CD4-positive, alpha-beta memory T cell (primary cell): ENCODE measurements at regions of chr17 and their contacts with region 1.

Region 1: GRCh38 chr17:385926-386876 is 33.6 kb upstream of the RPH3AL start:
- DNase-seq: peak; percentile 43 to 61 (median 53)
- H3K4me3 ChIP-seq: no peak overlapping the region
- H3K4me3 Mint-ChIP-seq: peak overlapping the region; percentile 82 to 89 (median 86)
- H3K27ac ChIP-seq: no peak overlapping the region
- H3K27ac Mint-ChIP-seq: peak overlapping the region in 6 of 7 donors; percentile 20 to 88 (median 72)
- H3K4me1 ChIP-seq: peaks cover 5% of the 10 kb centered on the region
- H3K4me1 Mint-ChIP-seq: peaks cover 11 to 40% (median 16%) of the 10 kb centered on the region in 4 donors
- H3K27me3 ChIP-seq: peaks cover 3% of the 10 kb centered on the region
- H3K27me3 Mint-ChIP-seq: peaks cover 3% of the 10 kb centered on the region in 2 donors

Region 2: GRCh38 chr17:143782-144281 is 242.4 kb before region 1 on chr17:
- CTCF ChIA-PET with region 1: interaction called, 3 read pairs
- POLR2A ChIA-PET with region 1: interaction called, 3 read pairs
- intact Hi-C with region 1: loop called (anchors 1 kb)
- DNase-seq: peak; percentile 73 to 85 (median 80)
- H3K4me3 ChIP-seq: no peak overlapping the region
- H3K4me3 Mint-ChIP-seq: peak overlapping the region in 1 of 8 donors; percentile 49
- H3K27ac ChIP-seq: no peak overlapping the region
- H3K27ac Mint-ChIP-seq: no peak overlapping the region
- H3K4me1 ChIP-seq: peaks cover 4% of the 10 kb centered on the region
- H3K4me1 Mint-ChIP-seq: peaks cover 0 to 2% (median under 1%) of the 10 kb centered on the region in 4 donors
- H3K27me3 ChIP-seq: no peaks in the 10 kb centered on the region
- H3K27me3 Mint-ChIP-seq: peaks cover 0 to 3% of the 10 kb centered on the region in 2 donors

Region 3: GRCh38 chr17:333626-334396 is 52.4 kb before region 1 on chr17:
- CTCF ChIA-PET with region 1: no interaction called
- POLR2A ChIA-PET with region 1: no interaction called
- intact Hi-C with region 1: loop called (anchors 10 kb)
- DNase-seq: no peak
- H3K4me3 ChIP-seq: no peak overlapping the region
- H3K4me3 Mint-ChIP-seq: peak overlapping the region in 4 of 8 donors; percentile 25 to 65 (median 54)
- H3K27ac ChIP-seq: no peak overlapping the region
- H3K27ac Mint-ChIP-seq: peak overlapping the region in 6 of 7 donors; percentile 13 to 74 (median 34)
- H3K4me1 ChIP-seq: peaks cover 49% of the 10 kb centered on the region
- H3K4me1 Mint-ChIP-seq: peaks cover 4 to 55% (median 35%) of the 10 kb centered on the region in 4 donors
- H3K27me3 ChIP-seq: no peaks in the 10 kb centered on the region
- H3K27me3 Mint-ChIP-seq: peaks cover 3 to 5% of the 10 kb centered on the region in 2 donors